ENCODE measurements at regions of chr6 and their contacts with region 1.

Region 1: GRCh38 chr6:45988635-45989034 is 27.0 kb downstream of the CLIC5 start:
- DNase-seq: peak; percentile 82

Region 2: GRCh38 chr6:45959534-45960145 is 29.0 kb before region 1 on chr6:
- intact Hi-C with region 1: no loop called
- DNase-seq: no peak

Region 3: DNA sequence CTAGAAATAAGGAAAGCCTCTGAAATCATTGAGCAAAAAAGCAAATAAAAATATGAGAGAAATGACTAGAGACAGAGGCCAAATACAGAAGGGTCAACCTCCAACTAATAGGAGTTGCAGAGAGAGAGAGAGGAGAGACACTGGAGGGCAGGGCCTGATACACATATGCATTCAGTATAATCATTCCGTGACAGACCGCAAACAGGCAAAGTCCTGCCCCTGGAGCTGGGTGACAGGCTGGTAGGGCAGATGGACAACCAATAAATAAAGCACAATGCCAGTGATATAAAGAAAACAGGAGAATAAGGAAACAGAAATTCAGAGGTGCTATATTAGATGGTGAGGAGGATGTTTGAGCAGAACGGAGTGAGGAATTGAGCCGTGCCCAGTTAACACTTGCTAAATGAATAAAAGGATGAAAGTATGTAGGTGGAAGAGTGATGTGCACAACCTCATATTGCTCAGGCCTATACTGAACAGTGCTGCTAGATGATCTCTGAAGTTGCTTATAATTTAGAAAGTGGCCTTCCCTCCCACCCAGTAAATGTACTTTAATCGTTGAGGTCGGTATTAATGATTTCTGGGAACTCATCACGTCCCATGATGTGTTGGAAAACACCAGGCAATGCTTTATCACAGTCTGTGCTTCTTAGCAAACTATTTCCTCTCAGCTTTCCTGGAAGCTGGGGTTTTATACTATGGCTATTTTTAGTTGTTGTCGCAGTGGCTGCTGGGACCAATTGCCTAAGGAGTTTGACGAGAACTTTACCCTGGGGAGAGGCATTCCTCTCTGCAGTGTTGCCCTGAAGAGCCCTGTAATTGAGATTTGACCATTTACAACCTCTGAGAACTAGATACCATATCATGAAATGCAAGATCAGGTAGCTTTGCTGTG is 64.7 kb after region 1 on chr6:
- intact Hi-C with region 1: loop called (anchors 2 kb)
- DNase-seq: no peak

Measured in cardiac septum (tissue), 1 donor.